Transverse colon (tissue), 4 donors: ENCODE measurements at regions of chr2 and their contacts with region 1.

Region 1: GRCh38 chr2:61538200-61538919 is at the start of gene XPO1:
- DNase-seq: peak; percentile 99
- H3K4me3 ChIP-seq: peak within 1 kb of the TSS; percentile 56 to 93 (median 82)
- H3K27ac ChIP-seq: peak within 1 kb of the TSS; percentile 94 to 98 (median 97)
- H3K4me1 ChIP-seq: peaks cover 15 to 32% (median 18%) of the 10 kb centered on the region in 4 donors
- H3K27me3 ChIP-seq: no peaks in the 10 kb centered on the region
- CTCF ChIP-seq: no peak
- EP300 ChIP-seq: peak; percentile 75
- POLR2A ChIP-seq: peak; percentile 92
- total RNA-seq, gene XPO1: 60.3 to 130 (median 78.0) TPM

Region 2: DNA sequence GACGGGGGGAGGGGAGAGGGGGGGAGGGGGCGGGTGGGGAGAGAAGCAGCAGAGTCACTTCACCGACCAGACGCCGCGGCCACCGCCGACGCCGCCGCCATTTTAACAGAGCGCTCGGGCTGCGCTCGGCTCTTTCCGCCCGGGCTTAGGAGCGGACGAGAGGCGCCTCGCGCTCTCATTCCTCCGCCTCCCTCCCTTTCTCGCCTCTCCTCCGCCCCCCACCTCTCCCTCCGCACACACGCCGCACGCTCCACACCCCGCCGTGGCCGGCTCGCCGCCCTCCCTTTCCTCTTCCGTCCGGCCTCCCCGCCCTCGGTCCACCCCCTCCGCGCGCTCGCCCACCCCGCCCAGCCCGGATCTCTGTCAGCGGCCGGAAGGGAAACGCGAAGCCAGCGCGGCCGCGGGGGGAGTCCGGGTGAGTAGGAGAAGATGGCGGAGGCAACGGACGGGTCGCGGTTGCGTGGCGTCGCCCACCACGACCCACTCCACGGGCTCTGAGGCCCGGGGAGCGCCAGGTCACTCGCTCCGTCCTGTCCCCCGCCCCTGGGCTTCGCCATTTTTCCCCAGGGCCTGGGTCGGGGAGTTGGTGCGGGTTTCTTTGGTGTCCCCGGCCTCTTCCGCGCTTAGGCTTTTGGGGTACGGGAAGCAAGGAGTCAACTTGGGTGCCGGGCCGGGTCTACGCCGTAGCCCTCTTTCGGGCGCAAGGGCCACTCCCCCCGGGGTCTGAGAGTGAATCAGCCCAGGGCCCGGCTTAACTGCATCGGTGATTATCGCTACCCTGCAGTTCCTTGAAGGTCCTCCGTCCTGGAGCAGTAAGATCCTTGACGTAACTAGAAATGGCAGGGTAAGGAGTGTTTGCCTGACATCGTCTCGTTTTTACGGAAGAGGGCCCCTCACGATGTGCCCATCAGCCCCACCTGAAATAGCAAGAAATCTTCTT is 67.1 kb before region 1 on chr2 and contains the start of gene USP34:
- in situ Hi-C with region 1: no loop called
- intact Hi-C with region 1: loop called (anchors 5 kb)
- DNase-seq: peak; percentile 96
- H3K4me3 ChIP-seq: peak within 1 kb of the TSS; percentile 84 to 92 (median 86)
- H3K27ac ChIP-seq: peak within 1 kb of the TSS; percentile 96 to 99 (median 98)
- H3K4me1 ChIP-seq: peaks cover 10 to 41% (median 18%) of the 10 kb centered on the region in 4 donors
- H3K27me3 ChIP-seq: no peaks in the 10 kb centered on the region
- CTCF ChIP-seq: peak in 2 of 5 experiments; percentile 41 to 46
- EP300 ChIP-seq: no peak
- POLR2A ChIP-seq: peak; percentile 89
- total RNA-seq, gene USP34: 103 to 181 (median 115) TPM

Region 3: GRCh38 chr2:61694312-61695274 is 156.2 kb after region 1 on chr2:
- in situ Hi-C with region 1: no loop called
- intact Hi-C with region 1: loop called (anchors 5 kb)
- DNase-seq: peak; percentile 97
- H3K4me3 ChIP-seq: peak overlapping the region; percentile 51 to 86 (median 72)
- H3K27ac ChIP-seq: peak overlapping the region; percentile 67 to 84 (median 83)
- H3K4me1 ChIP-seq: peaks cover 0 to 7% (median 3%) of the 10 kb centered on the region in 4 donors
- H3K27me3 ChIP-seq: no peaks in the 10 kb centered on the region
- CTCF ChIP-seq: peak; percentile 24 to 56 (median 41)
- EP300 ChIP-seq: no peak
- POLR2A ChIP-seq: peak; percentile 72

Region 4: DNA sequence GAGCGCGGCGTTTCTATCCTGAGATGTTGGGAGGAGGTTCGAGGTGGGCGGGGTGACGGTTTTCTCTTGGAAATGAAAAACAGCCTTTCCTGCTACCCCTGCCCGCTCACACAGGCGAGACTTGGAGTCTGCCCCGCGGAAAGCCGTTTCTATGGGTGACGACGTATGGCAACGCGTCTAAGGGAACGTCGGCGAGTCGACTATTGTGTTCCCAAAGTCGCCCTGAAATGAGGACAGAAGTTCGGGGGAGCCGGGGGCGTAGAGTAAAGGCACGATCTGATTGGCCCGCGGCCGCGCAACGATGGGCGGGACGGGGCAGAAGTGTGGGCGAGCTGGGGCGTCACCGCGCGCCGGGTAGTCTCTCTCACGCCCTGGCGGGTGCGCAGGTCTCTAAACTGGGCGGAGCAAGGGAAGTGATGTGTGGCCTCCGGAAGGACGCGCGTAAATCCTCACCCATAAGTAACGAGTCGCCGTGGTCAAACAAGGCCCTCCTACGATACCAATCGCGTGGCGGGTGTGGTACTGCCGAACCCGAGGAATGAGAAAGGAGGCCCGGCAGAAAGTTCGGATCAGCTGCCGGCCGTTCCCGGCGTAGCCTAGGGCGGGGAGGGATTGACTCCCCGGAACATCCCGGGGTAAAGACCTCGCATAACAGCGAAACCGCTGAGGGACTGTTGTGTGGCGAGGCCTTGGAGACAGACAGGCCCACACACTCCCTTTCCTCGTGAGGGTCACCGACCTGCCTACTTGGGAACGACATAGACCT is 225.9 kb after region 1 on chr2:
- in situ Hi-C with region 1: loop called in 1 of 4 experiments (anchors 10 kb)
- intact Hi-C with region 1: no loop called
- DNase-seq: peak; percentile 97
- H3K4me3 ChIP-seq: peak overlapping the region; percentile 57 to 84 (median 62)
- H3K27ac ChIP-seq: peak overlapping the region; percentile 94 to 99 (median 96)
- H3K4me1 ChIP-seq: peaks cover 0 to 12% (median 3%) of the 10 kb centered on the region in 4 donors
- H3K27me3 ChIP-seq: no peaks in the 10 kb centered on the region
- CTCF ChIP-seq: no peak
- EP300 ChIP-seq: no peak
- POLR2A ChIP-seq: peak; percentile 93

Region 5: GRCh38 chr2:61854474-61855182 is 316.3 kb after region 1 on chr2:
- in situ Hi-C with region 1: loop called in 1 of 4 experiments (anchors 25 kb)
- intact Hi-C with region 1: no loop called
- DNase-seq: peak; percentile 91
- H3K4me3 ChIP-seq: peak overlapping the region; percentile 48 to 72 (median 69)
- H3K27ac ChIP-seq: peak overlapping the region; percentile 78 to 89 (median 88)
- H3K4me1 ChIP-seq: peaks cover 3 to 18% (median 14%) of the 10 kb centered on the region in 4 donors
- H3K27me3 ChIP-seq: no peaks in the 10 kb centered on the region
- CTCF ChIP-seq: peak in 1 of 5 experiments; percentile 33
- EP300 ChIP-seq: no peak
- POLR2A ChIP-seq: no peak